ENCODE measurements at regions of chr12 and their contacts with region 1.

Region 1: DNA sequence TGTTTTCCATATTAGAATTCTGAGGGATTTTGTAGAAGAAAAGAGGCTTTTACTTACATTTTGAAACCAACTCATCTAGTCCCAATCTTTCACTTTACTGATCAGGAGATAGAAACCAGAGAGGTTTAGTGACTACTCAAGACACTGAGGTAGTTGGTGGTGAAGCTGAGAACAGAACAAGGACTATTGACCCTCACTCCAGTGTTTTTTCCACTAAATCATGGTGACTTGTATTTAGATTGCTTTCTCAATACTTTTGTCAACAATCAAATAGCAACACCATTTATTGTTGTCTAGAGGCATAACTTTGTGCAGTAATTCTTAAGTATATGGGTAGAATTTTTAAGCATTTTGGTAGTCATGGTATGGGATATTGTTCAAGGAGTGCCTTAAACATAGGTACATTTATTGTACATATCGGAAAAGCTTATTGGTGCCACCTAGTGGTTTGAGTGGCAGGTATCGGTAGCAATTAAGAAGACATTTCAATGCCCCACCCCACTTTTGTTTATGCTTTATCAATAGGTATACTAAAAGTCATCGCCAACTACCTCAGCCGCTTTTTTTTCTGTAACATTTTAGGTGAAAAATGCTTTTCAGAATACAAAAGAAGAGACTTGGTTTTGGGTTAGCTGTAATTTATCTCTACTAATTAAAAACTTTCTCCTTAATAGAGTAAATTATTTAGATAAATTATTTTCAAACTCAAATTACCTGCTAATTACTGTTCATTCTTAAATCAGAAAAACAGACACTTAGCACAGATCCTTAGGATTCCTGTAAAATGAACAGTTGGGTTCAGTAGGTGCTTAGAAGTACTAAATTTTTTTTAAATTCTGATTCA is 47.3 kb upstream of the PAWR start:
- DNase-seq: peak; percentile 57
- H3K4me3 ChIP-seq: no peak overlapping the region
- H3K27ac ChIP-seq: no peak overlapping the region
- H3K4me1 ChIP-seq: peaks cover 0 to 3% (median 0%) of the 10 kb centered on the region in 4 donors
- H3K27me3 ChIP-seq: no peaks in the 10 kb centered on the region
- CTCF ChIP-seq: peak; percentile 58 to 75 (median 59)
- EP300 ChIP-seq: no peak
- POLR2A ChIP-seq: no peak

Region 2: GRCh38 chr12:79402606-79403005 is 335.5 kb before region 1 on chr12:
- in situ Hi-C with region 1: loop called in 3 of 4 experiments (anchors 10 to 25 kb)
- intact Hi-C with region 1: loop called (anchors 5 kb)
- DNase-seq: no peak
- H3K4me3 ChIP-seq: no peak overlapping the region
- H3K27ac ChIP-seq: no peak overlapping the region
- H3K4me1 ChIP-seq: no peaks in the 10 kb centered on the region
- H3K27me3 ChIP-seq: no peaks in the 10 kb centered on the region
- CTCF ChIP-seq: no peak
- EP300 ChIP-seq: no peak
- POLR2A ChIP-seq: no peak

Region 3: GRCh38 chr12:79407671-79408622 is 330.1 kb before region 1 on chr12:
- in situ Hi-C with region 1: loop called in 3 of 4 experiments (anchors 10 to 25 kb)
- intact Hi-C with region 1: loop called (anchors 5 kb)
- DNase-seq: peak; percentile 69
- H3K4me3 ChIP-seq: no peak overlapping the region
- H3K27ac ChIP-seq: peak overlapping the region in 1 of 4 donors; percentile 2
- H3K4me1 ChIP-seq: peaks cover 0 to 18% (median 10%) of the 10 kb centered on the region in 4 donors
- H3K27me3 ChIP-seq: no peaks in the 10 kb centered on the region
- CTCF ChIP-seq: peak; percentile 55 to 74 (median 66)
- EP300 ChIP-seq: no peak
- POLR2A ChIP-seq: no peak

Region 4: DNA sequence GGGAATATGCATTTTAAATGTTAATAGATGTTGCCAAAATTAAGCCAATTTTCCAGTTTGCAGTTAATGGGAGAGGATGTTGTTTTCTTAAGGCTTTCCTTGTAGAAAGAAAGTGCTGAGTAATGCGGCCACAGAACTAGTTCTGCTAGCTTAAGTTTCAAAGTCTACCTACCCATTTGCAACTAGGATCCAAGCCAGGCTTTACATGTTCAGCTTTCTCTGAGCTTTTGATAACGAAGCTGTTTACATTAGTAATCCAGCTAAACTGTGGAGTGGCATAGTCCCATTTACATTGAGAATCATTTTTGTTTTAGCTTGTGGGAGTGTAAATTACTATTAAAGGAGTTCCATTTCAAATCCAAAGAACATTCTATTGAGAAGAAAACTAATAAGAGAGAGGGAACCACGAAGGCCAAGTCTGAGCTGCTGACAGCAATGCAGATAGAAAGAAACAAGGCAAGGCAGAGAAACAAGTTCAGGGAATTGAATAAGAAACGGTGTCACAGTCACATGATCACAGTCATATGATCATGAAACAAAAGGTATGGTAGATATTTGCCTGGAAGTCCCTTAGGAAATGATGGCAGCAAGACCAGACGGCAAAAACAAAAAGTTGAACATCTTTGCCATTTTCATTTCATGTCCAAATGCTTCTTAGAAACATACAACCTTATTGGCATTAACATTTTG is 322.2 kb before region 1 on chr12:
- in situ Hi-C with region 1: loop called in 1 of 4 experiments (anchors 25 kb)
- intact Hi-C with region 1: loop called (anchors 5 kb)
- DNase-seq: peak; percentile 32
- H3K4me3 ChIP-seq: no peak overlapping the region
- H3K27ac ChIP-seq: peak overlapping the region; percentile 77 to 79 (median 78)
- H3K4me1 ChIP-seq: peaks cover 3 to 52% (median 41%) of the 10 kb centered on the region in 4 donors
- H3K27me3 ChIP-seq: no peaks in the 10 kb centered on the region
- CTCF ChIP-seq: no peak
- EP300 ChIP-seq: no peak
- POLR2A ChIP-seq: no peak

Region 5: DNA sequence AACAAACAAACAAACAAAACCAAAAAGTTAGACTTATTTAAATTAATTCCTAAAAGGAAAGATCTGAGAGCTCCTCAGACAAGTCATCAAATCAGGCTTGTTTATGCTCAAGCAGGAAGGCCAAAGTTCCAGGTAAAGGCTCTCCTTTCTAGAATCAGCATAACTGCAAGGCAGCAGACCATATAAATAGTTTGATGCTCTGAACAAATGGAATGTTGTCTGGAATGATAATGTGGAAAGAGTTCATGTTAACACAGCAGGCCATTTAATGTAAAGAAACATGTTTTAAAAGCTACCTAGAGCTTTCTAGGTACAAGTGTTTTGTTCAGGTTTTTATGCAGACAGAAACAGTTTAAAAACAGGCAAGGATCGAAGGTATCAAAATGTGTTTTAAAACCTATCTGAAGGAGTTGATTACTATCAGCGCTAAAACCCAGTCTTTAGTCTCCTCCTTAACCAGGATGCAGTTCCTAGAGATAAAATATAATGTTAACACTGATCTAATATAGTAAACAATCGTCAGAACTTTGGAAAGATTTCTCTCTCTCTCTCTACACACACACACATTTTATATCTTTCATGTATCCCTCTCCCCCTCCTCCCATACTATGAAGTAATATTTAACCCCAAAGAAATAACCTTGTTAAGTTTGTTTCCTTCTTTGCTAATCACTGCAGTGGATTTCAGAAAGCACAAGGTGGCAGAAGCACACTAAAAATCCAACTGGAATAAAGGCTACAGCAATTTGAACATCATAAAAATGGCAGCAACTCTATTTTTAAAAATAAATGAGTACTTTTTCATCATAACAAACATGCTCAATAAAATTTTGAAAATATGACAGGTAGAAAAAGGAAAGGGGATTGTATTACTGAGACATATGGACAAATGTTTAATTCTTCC is 182.8 kb before region 1 on chr12:
- in situ Hi-C with region 1: loop called (anchors 5 to 25 kb)
- intact Hi-C with region 1: loop called (anchors 10 kb)
- DNase-seq: no peak
- H3K4me3 ChIP-seq: no peak overlapping the region
- H3K27ac ChIP-seq: no peak overlapping the region
- H3K4me1 ChIP-seq: peaks cover 4 to 33% (median 11%) of the 10 kb centered on the region in 4 donors
- H3K27me3 ChIP-seq: no peaks in the 10 kb centered on the region
- CTCF ChIP-seq: peak; percentile 49 to 74 (median 54)
- EP300 ChIP-seq: no peak
- POLR2A ChIP-seq: no peak

Region 6: DNA sequence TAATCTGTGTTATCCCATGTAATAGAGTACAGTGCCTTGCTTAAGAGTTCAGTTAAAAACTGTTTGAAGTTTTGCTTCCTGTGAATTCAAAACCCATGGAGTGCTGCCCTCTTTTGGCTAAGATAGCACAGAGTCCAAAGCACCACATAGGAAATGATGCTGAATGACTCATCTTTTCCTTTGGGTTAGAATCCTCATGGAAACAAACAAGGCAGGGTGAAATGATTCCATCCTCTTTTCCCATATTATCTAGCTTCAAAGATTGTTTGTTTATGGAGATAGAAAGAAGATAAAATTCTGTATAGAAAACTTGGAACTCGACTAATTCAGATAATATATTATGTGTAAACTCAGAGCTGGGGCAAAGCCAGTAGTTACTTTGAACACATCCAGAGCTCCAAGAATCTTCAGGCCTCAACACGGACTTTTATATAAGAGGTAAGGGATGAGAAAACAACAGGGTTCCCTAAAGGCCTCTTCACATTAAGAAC is 448.7 kb after region 1 on chr12:
- in situ Hi-C with region 1: loop called in 1 of 4 experiments (anchors 25 kb)
- intact Hi-C with region 1: no loop called
- DNase-seq: peak; percentile 37
- H3K4me3 ChIP-seq: no peak overlapping the region
- H3K27ac ChIP-seq: peak overlapping the region; percentile 77 to 85 (median 80)
- H3K4me1 ChIP-seq: peaks cover 2 to 21% (median 8%) of the 10 kb centered on the region in 4 donors
- H3K27me3 ChIP-seq: no peaks in the 10 kb centered on the region
- CTCF ChIP-seq: peak; percentile 55 to 63 (median 59)
- EP300 ChIP-seq: peak; percentile 53
- POLR2A ChIP-seq: no peak

Measured in transverse colon (tissue), 4 donors.